ENCODE measurements at regions of chr9 and their contacts with region 1.

Region 1: GRCh38 chr9:76297721-76298239 is 96.4 kb downstream of the RFK start:
- DNase-seq: peak; percentile 34 to 76 (median 58)
- ATAC-seq: peak; percentile 81 to 90
- H3K4me3 ChIP-seq: no peak overlapping the region
- H3K27ac ChIP-seq: peak overlapping the region; percentile 26
- H3K4me1 ChIP-seq: no peaks in the 10 kb centered on the region
- H3K27me3 ChIP-seq: no peaks in the 10 kb centered on the region

Region 2: DNA sequence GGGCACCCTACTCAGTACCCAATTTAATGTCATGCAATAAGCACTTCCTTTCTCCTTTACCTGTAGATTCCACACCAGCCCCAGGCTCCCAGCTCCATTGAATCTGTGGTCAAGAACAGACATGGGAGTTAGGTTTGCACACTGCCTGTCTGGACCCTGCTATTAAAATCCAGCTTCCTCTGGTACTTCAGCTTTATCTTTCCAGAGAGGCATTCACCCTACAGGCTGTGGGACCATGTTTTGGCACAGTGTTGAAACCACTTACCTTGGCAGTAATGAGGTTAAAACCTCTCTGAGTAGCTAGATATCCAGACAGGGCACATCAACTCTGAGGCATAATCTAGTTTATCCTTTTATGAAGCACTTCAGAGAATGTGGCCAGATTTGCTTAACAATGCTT is 598.8 kb before region 1 on chr9:
- intact Hi-C with region 1: no loop called
- DNase-seq: no peak
- ATAC-seq: peak in 1 of 2 donors; percentile 69
- H3K4me3 ChIP-seq: no peak overlapping the region
- H3K27ac ChIP-seq: no peak overlapping the region
- H3K4me1 ChIP-seq: peaks cover 4% of the 10 kb centered on the region
- H3K27me3 ChIP-seq: no peaks in the 10 kb centered on the region

Region 3: DNA sequence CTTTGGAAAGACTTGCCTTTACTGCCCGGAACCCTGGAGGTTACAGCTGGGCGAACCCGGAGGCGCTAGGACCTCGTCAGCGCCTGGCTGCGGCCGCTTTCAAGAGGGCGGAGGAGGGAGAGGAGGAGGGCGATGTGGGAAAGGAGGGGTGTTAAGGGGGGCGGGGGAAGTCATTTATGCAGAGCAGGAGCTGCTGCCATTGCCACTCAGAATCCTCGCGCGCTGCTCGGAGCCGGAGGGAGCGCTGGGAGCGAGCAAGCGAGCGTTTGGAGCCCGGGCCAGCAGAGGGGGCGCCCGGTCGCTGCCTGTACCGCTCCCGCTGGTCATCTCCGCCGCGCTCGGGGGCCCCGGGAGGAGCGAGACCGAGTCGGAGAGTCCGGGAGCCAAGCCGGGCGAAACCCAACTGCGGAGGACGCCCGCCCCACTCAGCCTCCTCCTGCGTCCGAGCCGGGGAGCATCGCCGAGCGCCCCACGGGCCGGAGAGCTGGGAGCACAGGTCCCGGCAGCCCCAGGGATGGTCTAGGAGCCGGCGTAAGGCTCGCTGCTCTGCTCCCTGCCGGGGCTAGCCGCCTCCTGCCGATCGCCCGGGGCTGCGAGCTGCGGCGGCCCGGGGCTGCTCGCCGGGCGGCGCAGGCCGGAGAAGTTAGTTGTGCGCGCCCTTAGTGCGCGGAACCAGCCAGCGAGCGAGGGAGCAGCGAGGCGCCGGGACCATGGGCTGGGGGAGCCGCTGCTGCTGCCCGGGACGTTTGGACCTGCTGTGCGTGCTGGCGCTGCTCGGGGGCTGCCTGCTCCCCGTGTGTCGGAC is 407.1 kb before region 1 on chr9 and contains the start of gene PCSK5:
- intact Hi-C with region 1: loop called in 2 of 4 experiments (anchors 10 kb)
- DNase-seq: peak; percentile 92 to 96 (median 96)
- ATAC-seq: peak; percentile 98
- H3K4me3 ChIP-seq: peak within 1 kb of the TSS; percentile 77
- H3K27ac ChIP-seq: peak within 1 kb of the TSS; percentile 63
- H3K4me1 ChIP-seq: peaks cover 2% of the 10 kb centered on the region
- H3K27me3 ChIP-seq: no peaks in the 10 kb centered on the region
- total RNA-seq, gene PCSK5: 4.9 to 7.6 (median 5.8) TPM

Region 4: GRCh38 chr9:76044266-76044819 is 253.4 kb before region 1 on chr9:
- intact Hi-C with region 1: no loop called
- DNase-seq: no peak
- ATAC-seq: no peak
- H3K4me3 ChIP-seq: no peak overlapping the region
- H3K27ac ChIP-seq: no peak overlapping the region
- H3K4me1 ChIP-seq: no peaks in the 10 kb centered on the region
- H3K27me3 ChIP-seq: no peaks in the 10 kb centered on the region

Region 5: GRCh38 chr9:76136986-76137385 is 160.8 kb before region 1 on chr9:
- intact Hi-C with region 1: no loop called
- DNase-seq: no peak
- ATAC-seq: peak in 1 of 2 donors; percentile 14
- H3K4me3 ChIP-seq: no peak overlapping the region
- H3K27ac ChIP-seq: no peak overlapping the region
- H3K4me1 ChIP-seq: no peaks in the 10 kb centered on the region
- H3K27me3 ChIP-seq: no peaks in the 10 kb centered on the region

Measured in right cardiac atrium (tissue), 5 donors.